Calu3 (cell line): ENCODE measurements at regions of chr11 and their contacts with region 1.

Region 1: DNA sequence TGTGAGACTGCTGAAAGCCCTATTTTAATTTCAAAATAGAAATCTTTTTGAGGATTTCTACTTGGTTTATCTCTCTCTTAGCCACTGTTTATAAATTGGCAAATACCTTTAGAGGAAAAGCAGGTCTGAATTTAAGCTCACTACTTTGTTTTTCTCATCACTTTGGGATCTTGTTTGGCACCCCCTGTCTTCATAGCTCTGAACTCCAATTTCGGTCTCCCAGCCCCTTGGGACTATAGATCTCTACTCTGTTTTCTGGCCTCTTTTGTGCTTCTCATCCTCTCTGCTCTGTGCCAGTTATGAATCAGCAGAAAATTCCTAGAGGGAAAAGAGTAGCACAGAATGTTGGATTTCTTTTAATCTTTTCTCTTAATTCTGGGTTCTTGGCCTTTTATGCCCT is 118.3 kb downstream of the CYP2R1 start:
- DNase-seq: peak; percentile 2
- H3K4me3 Mint-ChIP-seq: no peak overlapping the region
- H3K27ac Mint-ChIP-seq: no peak overlapping the region
- H3K4me1 Mint-ChIP-seq: peaks cover 9% of the 10 kb centered on the region
- H3K27me3 Mint-ChIP-seq: no peaks in the 10 kb centered on the region
- CTCF ChIP-seq: no peak

Region 2: DNA sequence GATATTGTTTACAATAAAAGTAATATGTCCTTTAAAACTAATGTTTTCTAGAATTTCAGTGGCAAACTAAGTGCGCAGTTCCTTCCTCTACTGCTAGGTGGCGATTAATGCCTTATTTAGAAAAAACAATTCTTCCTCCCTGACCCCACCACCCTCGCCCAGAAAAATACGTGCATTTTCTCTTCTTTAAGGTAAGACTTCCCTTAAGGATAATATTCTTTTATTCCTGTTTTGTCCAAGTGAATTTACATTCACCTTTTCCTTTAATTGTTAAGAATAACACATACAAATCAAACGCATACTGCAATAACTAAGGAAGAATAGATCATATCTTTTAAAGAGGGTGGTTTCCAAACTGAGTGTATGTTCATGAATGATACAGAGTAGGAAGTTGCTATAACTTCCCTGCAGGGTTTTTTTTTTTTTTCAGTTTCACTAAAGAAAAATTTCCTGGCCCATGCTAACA is 236.6 kb before region 1 on chr11:
- CTCF ChIA-PET with region 1: no interaction called
- intact Hi-C with region 1: loop called (anchors 5 kb)
- DNase-seq: peak; percentile 22
- H3K4me3 Mint-ChIP-seq: no peak overlapping the region
- H3K27ac Mint-ChIP-seq: no peak overlapping the region
- H3K4me1 Mint-ChIP-seq: no peaks in the 10 kb centered on the region
- H3K27me3 Mint-ChIP-seq: no peaks in the 10 kb centered on the region
- CTCF ChIP-seq: peak; percentile 72

Region 3: GRCh38 chr11:14619603-14620531 is 153.9 kb before region 1 on chr11:
- CTCF ChIA-PET with region 1: no interaction called
- intact Hi-C with region 1: no loop called
- DNase-seq: no peak
- H3K4me3 Mint-ChIP-seq: no peak overlapping the region
- H3K27ac Mint-ChIP-seq: no peak overlapping the region
- H3K4me1 Mint-ChIP-seq: no peaks in the 10 kb centered on the region
- H3K27me3 Mint-ChIP-seq: no peaks in the 10 kb centered on the region
- CTCF ChIP-seq: no peak